ENCODE measurements at regions of chr9 and their contacts with region 1.

Region 1: DNA sequence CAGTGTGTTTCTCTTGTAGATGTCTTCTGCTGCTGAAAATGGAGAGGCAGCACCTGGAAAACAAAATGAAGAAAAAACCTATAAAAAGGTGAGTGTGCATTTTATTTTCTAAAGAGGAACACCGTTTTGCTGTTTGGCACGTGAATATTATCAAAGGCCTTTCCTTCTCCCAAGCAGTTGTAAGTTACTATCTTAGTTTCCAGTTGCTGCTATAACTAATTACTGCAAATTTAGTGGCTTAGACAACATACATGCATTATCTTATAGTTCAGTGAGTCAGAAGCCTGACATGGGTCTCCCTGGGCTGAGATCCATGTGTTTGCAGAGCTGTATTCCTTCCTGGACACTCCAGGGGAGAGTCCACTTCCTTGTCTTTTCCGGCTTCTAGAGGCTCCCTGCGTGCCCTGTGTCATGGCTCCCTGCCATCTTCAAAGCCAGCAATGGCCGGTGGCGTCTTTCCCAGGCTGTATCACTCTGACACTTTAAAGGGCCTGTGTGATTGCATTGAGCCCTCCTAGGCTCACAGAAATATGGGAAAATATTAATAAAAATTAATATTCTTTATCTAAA is 117.6 kb downstream of the PIP5K1B start:
- DNase-seq: peak; percentile 64 to 65
- ATAC-seq: peak; percentile 72 to 96 (median 90)
- H3K4me3 ChIP-seq: no peak overlapping the region
- H3K27ac ChIP-seq: peak overlapping the region in 8 of 10 donors; percentile 8 to 65 (median 34)
- H3K4me1 ChIP-seq: peaks cover 0 to 30% (median 12%) of the 10 kb centered on the region in 9 donors
- H3K27me3 ChIP-seq: no peaks in the 10 kb centered on the region
- CTCF ChIP-seq: no peak

Region 2: GRCh38 chr9:68808338-68808890 is 14.3 kb before region 1 on chr9:
- intact Hi-C with region 1: no loop called
- DNase-seq: no peak
- ATAC-seq: no peak
- H3K4me3 ChIP-seq: no peak overlapping the region
- H3K27ac ChIP-seq: no peak overlapping the region
- H3K4me1 ChIP-seq: peaks cover 5 to 63% (median 29%) of the 10 kb centered on the region in 9 donors
- H3K27me3 ChIP-seq: no peaks in the 10 kb centered on the region
- CTCF ChIP-seq: no peak

Region 3: GRCh38 chr9:68974431-68974830 is 151.8 kb after region 1 on chr9:
- intact Hi-C with region 1: loop called in 1 of 10 experiments (anchors 10 kb)
- DNase-seq: no peak
- ATAC-seq: peak in 4 of 8 donors; percentile 8 to 37 (median 26)
- H3K4me3 ChIP-seq: peak overlapping the region; percentile 8 to 61 (median 50)
- H3K27ac ChIP-seq: peak overlapping the region; percentile 69 to 91 (median 82)
- H3K4me1 ChIP-seq: peaks cover 0 to 40% (median 9%) of the 10 kb centered on the region in 9 donors
- H3K27me3 ChIP-seq: no peaks in the 10 kb centered on the region
- CTCF ChIP-seq: no peak